Activated T-helper 1 cell treated with anti-CD3 and anti-CD28 coated beads, Interleukin-12 subunit alpha, Interleukin-12 subunit beta, Interleukin-2, Interleukin-4 antibody, amounts not matched to agents 30 ng/mL and 10 ng/mL and 1 ng/mL, durations not matched to agents 14 hours and 24 hours and 36 hours (primary cell): ENCODE measurements at regions of chrX and their contacts with region 1.

Region 1: DNA sequence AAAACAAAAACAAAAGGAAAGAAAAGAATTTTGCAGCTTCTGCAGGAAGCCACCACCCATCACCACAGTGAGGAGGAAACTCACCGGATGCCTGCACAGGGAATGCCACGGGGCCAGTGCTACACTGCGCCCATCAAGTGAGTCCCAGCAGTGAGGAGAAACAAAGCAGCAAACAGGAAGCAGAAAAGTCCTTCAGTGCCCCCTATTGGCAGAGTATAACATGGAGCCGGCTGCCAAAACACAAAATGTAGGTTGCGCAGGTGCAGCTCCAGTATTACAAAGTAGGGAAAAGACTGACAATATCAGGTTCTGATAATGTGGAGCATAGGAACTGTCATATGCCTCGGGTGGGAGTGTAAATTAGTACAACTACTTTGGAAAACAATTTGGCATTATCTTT is 23.3 kb upstream of the SCML2 start:
- DNase-seq: no peak
- H3K4me3 Mint-ChIP-seq: no peak overlapping the region
- H3K27ac Mint-ChIP-seq: no peak overlapping the region
- H3K4me1 Mint-ChIP-seq: peaks cover 5% of the 10 kb centered on the region
- H3K27me3 Mint-ChIP-seq: no peaks in the 10 kb centered on the region

Region 2: GRCh38 chrX:17242470-17242869 is 1135.3 kb before region 1 on chrX:
- intact Hi-C with region 1: loop called (anchors 2 kb)
- DNase-seq: no peak
- H3K4me3 Mint-ChIP-seq: no peak overlapping the region
- H3K27ac Mint-ChIP-seq: no peak overlapping the region
- H3K4me1 Mint-ChIP-seq: no peaks in the 10 kb centered on the region
- H3K27me3 Mint-ChIP-seq: no peaks in the 10 kb centered on the region

Region 3: GRCh38 chrX:17744896-17745523 is 632.8 kb before region 1 on chrX:
- intact Hi-C with region 1: loop called (anchors 2 kb)
- DNase-seq: no peak
- H3K4me3 Mint-ChIP-seq: no peak overlapping the region
- H3K27ac Mint-ChIP-seq: no peak overlapping the region
- H3K4me1 Mint-ChIP-seq: no peaks in the 10 kb centered on the region
- H3K27me3 Mint-ChIP-seq: peaks cover 29% of the 10 kb centered on the region

Region 4: GRCh38 chrX:17944833-17945497 is 432.8 kb before region 1 on chrX:
- intact Hi-C with region 1: loop called (anchors 2 kb)
- DNase-seq: no peak
- H3K4me3 Mint-ChIP-seq: no peak overlapping the region
- H3K27ac Mint-ChIP-seq: no peak overlapping the region
- H3K4me1 Mint-ChIP-seq: no peaks in the 10 kb centered on the region
- H3K27me3 Mint-ChIP-seq: peaks cover 2% of the 10 kb centered on the region

Region 5: GRCh38 chrX:18406531-18407266 is 28.9 kb after region 1 on chrX:
- intact Hi-C with region 1: no loop called
- DNase-seq: no peak
- H3K4me3 Mint-ChIP-seq: no peak overlapping the region
- H3K27ac Mint-ChIP-seq: no peak overlapping the region
- H3K4me1 Mint-ChIP-seq: no peaks in the 10 kb centered on the region
- H3K27me3 Mint-ChIP-seq: peaks cover under 1% of the 10 kb centered on the region

Region 6: GRCh38 chrX:18702362-18703195 is 324.8 kb after region 1 on chrX:
- intact Hi-C with region 1: no loop called
- DNase-seq: no peak
- H3K4me3 Mint-ChIP-seq: no peak overlapping the region
- H3K27ac Mint-ChIP-seq: no peak overlapping the region
- H3K4me1 Mint-ChIP-seq: no peaks in the 10 kb centered on the region
- H3K27me3 Mint-ChIP-seq: peaks cover 2% of the 10 kb centered on the region